Activated CD4-positive, alpha-beta memory T cell treated with anti-CD3 and anti-CD28 coated beads for 36 hours (primary cell): ENCODE measurements at regions of chr17 and their contacts with region 1.

Region 1: GRCh38 chr17:48047741-48048383 is at the start of gene NFE2L1:
- DNase-seq: peak; percentile 100
- H3K4me3 Mint-ChIP-seq: peak within 1 kb of the TSS; percentile 97
- H3K27ac Mint-ChIP-seq: peak within 1 kb of the TSS; percentile 97
- H3K4me1 Mint-ChIP-seq: peaks cover 50% of the 10 kb centered on the region
- H3K27me3 Mint-ChIP-seq: no peaks in the 10 kb centered on the region
- total RNA-seq, gene NFE2L1: 82.4 to 84.1 TPM

Region 2: GRCh38 chr17:47970704-47971463 is 77.0 kb before region 1 on chr17 and contains the start of gene CDK5RAP3:
- CTCF ChIA-PET with region 1: interaction called, 8 read pairs
- POLR2A ChIA-PET with region 1: interaction called, 3 read pairs
- intact Hi-C with region 1: loop called (anchors 2 kb)
- DNase-seq: peak; percentile 100
- H3K4me3 Mint-ChIP-seq: peak within 1 kb of the TSS; percentile 88
- H3K27ac Mint-ChIP-seq: peak within 1 kb of the TSS; percentile 85
- H3K4me1 Mint-ChIP-seq: peaks cover 22% of the 10 kb centered on the region
- H3K27me3 Mint-ChIP-seq: no peaks in the 10 kb centered on the region
- total RNA-seq, gene CDK5RAP3: 170 to 183 TPM

Region 3: DNA sequence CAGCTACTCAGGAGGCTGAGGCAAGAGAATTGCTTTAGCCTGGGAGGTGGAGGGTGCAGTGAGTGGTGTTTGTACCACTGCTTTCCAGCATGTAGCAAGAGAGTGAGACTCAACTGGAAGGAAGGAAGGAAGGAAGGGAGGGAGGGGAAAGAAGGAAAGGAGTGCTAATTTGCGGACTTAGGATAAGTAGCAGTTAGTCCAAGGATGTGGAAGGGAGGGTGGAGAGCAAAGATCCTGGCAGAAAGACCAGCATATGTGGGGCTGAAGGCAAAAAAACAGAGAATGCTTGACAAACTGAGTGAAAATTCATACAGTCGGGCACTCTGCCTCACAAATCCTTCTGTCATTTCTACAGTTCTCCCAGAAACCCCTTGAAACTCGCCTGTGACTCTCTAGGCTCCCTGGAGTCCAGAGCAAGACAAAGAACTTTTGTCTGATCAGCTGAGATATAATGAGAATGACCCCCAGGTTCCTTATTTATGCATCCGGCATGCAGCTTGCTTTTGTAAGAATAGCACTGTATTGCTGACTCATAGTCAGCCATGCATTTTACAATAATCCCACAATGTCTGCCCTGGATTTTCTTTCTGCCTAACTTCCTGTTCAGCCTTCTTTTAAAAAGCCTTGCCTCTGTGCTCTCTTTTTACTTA is 45.5 kb before region 1 on chr17:
- CTCF ChIA-PET with region 1: no interaction called
- POLR2A ChIA-PET with region 1: no interaction called
- intact Hi-C with region 1: no loop called
- DNase-seq: no peak
- H3K4me3 Mint-ChIP-seq: no peak overlapping the region
- H3K27ac Mint-ChIP-seq: no peak overlapping the region
- H3K4me1 Mint-ChIP-seq: peaks cover 7% of the 10 kb centered on the region
- H3K27me3 Mint-ChIP-seq: peaks cover 18% of the 10 kb centered on the region

Region 4: GRCh38 chr17:48060249-48060648 is 12.4 kb after region 1 on chr17:
- CTCF ChIA-PET with region 1: interaction called, 3 read pairs
- POLR2A ChIA-PET with region 1: interaction called, 31 read pairs
- intact Hi-C with region 1: no loop called
- DNase-seq: no peak
- H3K4me3 Mint-ChIP-seq: no peak overlapping the region
- H3K27ac Mint-ChIP-seq: no peak overlapping the region
- H3K4me1 Mint-ChIP-seq: peaks cover 22% of the 10 kb centered on the region
- H3K27me3 Mint-ChIP-seq: no peaks in the 10 kb centered on the region

Region 5: DNA sequence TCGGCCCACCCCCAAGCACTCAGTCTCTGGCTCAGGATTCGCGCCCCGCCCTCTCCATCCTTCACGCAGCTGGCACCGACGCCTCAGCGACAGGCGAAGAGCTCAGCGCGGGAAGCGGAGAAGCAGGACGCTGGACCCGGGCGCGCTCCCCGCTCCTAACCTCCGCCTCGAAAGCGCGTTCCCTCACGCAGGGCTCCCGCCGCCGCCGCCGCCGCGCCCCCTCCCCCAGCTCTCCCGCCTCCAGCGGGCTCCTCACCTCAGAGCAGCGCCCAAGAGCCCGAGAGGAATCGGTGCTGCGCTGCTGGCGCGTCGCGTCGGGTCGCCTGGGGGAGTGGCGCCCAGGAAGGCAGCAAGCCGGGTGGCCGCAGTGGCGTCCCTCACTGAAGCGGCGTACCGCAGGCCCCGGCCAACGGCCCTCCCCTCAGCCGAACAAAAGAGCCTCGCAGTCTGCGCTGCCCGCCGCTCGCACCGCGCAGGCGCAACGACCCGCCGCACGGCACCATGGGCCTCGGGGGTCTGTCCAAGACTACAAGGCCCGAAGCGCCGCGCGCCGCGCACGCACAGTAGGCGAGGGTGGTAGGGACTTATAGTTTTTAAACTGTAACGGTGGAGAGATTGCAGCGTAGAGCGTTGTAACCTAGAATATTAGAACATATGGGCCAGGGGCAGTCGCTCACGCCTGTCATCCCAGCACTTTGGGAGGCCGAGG is 53.3 kb after region 1 on chr17 and contains the start of gene CBX1:
- CTCF ChIA-PET with region 1: interaction called, 3 read pairs
- POLR2A ChIA-PET with region 1: interaction called, 17 read pairs
- intact Hi-C with region 1: loop called (anchors 1 kb)
- DNase-seq: peak; percentile 96
- H3K4me3 Mint-ChIP-seq: peak within 1 kb of the TSS; percentile 98
- H3K27ac Mint-ChIP-seq: peak within 1 kb of the TSS; percentile 89
- H3K4me1 Mint-ChIP-seq: peaks cover 40% of the 10 kb centered on the region
- H3K27me3 Mint-ChIP-seq: no peaks in the 10 kb centered on the region
- total RNA-seq, gene CBX1: 55.3 to 56.7 TPM

Region 6: DNA sequence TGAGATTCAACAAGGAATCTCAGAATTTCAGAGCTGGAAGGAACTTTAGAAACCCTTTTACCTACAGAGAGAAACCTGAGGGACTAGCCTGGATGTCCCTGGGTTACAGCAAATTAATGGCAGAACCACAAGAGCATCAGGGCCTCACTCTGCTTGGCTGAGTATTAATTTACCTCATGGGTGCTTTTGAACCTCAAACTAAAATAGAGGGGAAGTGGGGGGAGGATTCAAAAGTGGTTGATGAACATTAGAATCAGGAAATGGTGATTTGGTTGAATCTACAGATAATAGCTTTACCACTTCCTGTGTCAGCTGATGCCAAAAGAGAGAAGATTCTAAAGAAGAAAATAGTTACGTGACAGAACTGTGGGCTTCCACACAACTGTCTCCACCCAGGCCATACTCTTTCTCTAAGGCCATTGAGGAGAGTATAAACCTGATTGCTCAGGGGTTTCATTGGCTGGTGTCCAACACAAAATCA is 393.4 kb after region 1 on chr17:
- CTCF ChIA-PET with region 1: no interaction called
- POLR2A ChIA-PET with region 1: no interaction called
- intact Hi-C with region 1: loop called (anchors 5 kb)
- DNase-seq: peak; percentile 48
- H3K4me3 Mint-ChIP-seq: peak overlapping the region; percentile 7
- H3K27ac Mint-ChIP-seq: peak overlapping the region; percentile 88
- H3K4me1 Mint-ChIP-seq: peaks cover 92% of the 10 kb centered on the region
- H3K27me3 Mint-ChIP-seq: no peaks in the 10 kb centered on the region